Activated CD4-positive, alpha-beta memory T cell treated with anti-CD3 and anti-CD28 coated beads for 36 hours (primary cell): ENCODE measurements at regions of chr13 and their contacts with region 1.

Region 1: GRCh38 chr13:98842864-98843481 is 90.5 kb upstream of the SLC15A1 start:
- DNase-seq: peak; percentile 79
- H3K4me3 Mint-ChIP-seq: no peak overlapping the region
- H3K27ac Mint-ChIP-seq: no peak overlapping the region
- H3K4me1 Mint-ChIP-seq: no peaks in the 10 kb centered on the region
- H3K27me3 Mint-ChIP-seq: no peaks in the 10 kb centered on the region

Region 2: GRCh38 chr13:98826146-98826545 is 16.8 kb before region 1 on chr13:
- CTCF ChIA-PET with region 1: interaction called, 38 read pairs
- POLR2A ChIA-PET with region 1: no interaction called
- intact Hi-C with region 1: no loop called
- DNase-seq: no peak
- H3K4me3 Mint-ChIP-seq: no peak overlapping the region
- H3K27ac Mint-ChIP-seq: no peak overlapping the region
- H3K4me1 Mint-ChIP-seq: peaks cover 4% of the 10 kb centered on the region
- H3K27me3 Mint-ChIP-seq: no peaks in the 10 kb centered on the region